Activated naive CD4-positive, alpha-beta T cell treated with anti-CD3 and anti-CD28 coated beads for 36 hours (primary cell): ENCODE measurements at regions of chr5 and their contacts with region 1.

Region 1: DNA sequence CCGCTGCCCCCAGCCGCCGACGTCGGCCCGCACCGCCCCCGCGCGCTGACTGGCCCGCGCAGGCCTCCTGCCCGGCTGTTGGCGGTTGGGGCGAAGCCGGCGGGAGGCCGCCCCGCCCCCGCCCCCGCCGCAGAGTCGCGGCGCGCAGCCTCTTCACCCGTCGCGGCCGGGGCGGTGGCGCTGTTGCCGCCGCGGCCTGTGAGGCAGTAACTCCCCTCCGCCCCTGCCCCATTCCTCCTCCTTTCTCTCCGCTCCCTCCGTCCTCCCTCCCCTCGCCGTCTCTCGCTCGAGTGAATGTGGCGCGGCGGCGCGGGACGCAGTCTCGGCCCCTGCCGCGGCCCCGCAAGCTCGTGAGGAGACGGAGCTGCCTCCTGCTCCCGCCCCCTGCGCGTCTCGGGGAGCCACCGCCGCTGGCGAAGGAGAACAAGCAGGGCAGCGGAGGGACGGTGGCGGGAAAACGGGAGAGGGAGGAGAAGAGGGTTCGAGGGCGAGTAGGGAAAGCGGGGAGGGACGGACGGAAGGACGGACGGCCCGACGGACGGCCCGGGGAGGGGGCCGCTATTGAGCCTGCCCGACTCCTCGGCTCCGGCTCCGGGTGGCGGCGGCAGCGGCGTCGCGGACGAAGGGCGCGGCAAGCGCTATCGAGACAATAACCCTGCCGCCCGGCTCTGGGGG is 637 bp upstream of the ERBIN start:
- DNase-seq: peak; percentile 77
- H3K4me3 Mint-ChIP-seq: peak overlapping the region; percentile 82
- H3K27ac Mint-ChIP-seq: peak overlapping the region; percentile 92
- H3K4me1 Mint-ChIP-seq: peaks cover 26% of the 10 kb centered on the region
- H3K27me3 Mint-ChIP-seq: no peaks in the 10 kb centered on the region

Region 2: GRCh38 chr5:64768358-64769312 is 1157.1 kb before region 1 on chr5 and contains the starts of genes CWC27 and SREK1IP1:
- CTCF ChIA-PET with region 1: no interaction called
- intact Hi-C with region 1: loop called (anchors 1 kb)
- DNase-seq: peak; percentile 90
- H3K4me3 Mint-ChIP-seq: peak within 1 kb of the TSS; percentile 99
- H3K27ac Mint-ChIP-seq: peak within 1 kb of the TSS; percentile 97
- H3K4me1 Mint-ChIP-seq: peaks cover 53% of the 10 kb centered on the region
- H3K27me3 Mint-ChIP-seq: no peaks in the 10 kb centered on the region
- total RNA-seq, gene CWC27: 35.8 to 39.8 TPM
- total RNA-seq, gene SREK1IP1: 16.7 to 17.6 TPM

Region 3: DNA sequence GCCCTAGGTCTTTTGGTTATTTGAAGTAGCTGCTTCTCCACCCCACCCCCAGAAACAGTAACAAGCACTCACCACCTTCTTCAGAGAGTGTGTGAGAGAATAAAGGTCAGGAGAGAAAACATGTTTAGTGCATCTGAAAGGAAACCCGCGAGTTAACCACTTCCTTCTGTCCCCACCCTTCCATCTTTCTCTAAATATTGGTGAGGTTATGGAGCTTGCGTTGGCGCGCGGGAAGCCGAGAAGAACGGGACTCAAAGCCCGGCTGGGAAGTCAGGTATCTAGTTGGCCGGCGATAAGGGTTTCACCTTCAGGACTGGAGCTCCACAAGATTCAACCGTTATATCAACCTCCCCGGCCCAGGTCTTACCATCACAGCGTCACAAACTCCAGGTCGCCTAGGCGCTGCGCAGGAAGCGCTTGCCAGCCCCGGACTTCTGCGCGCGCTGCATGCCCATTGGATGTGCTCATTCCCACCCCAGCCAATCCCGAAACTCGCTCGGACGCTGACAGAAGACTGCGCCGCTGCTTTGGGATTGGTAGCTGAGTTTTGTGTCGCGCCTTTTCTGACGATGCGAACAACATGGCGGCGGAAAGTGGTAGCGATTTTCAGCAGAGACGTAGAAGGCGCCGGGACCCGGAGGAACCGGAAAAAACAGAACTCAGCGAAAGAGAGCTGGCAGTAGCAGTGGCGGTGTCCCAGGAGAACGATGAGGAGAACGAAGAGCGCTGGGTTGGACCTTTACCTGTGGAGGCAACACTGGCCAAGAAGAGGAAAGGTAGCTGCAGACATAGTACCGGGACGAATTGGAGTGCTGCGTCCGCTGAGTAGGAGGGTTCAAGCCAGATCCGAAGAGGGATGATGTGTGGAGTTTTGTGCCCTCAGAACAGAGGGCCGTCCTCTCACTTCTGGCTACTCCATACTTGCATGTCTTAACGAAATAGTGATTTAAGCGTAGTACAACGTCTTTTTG is 362.7 kb before region 1 on chr5 and contains the starts of genes CENPK and PPWD1:
- CTCF ChIA-PET with region 1: no interaction called
- intact Hi-C with region 1: loop called (anchors 2 kb)
- DNase-seq: peak; percentile 98
- H3K4me3 Mint-ChIP-seq: peak within 1 kb of the TSS; percentile 98
- H3K27ac Mint-ChIP-seq: peak within 1 kb of the TSS; percentile 96
- H3K4me1 Mint-ChIP-seq: peaks cover 45% of the 10 kb centered on the region
- H3K27me3 Mint-ChIP-seq: no peaks in the 10 kb centered on the region
- total RNA-seq, gene CENPK: 80.9 to 83.1 TPM
- total RNA-seq, gene PPWD1: 33.6 to 33.9 TPM

Region 4: GRCh38 chr5:65721720-65722574 is 203.8 kb before region 1 on chr5 and contains the starts of genes NLN and SGTB:
- CTCF ChIA-PET with region 1: no interaction called
- intact Hi-C with region 1: loop called (anchors 1 kb)
- DNase-seq: peak; percentile 80
- H3K4me3 Mint-ChIP-seq: peak within 1 kb of the TSS; percentile 88
- H3K27ac Mint-ChIP-seq: peak within 1 kb of the TSS; percentile 94
- H3K4me1 Mint-ChIP-seq: peaks cover 13% of the 10 kb centered on the region
- H3K27me3 Mint-ChIP-seq: no peaks in the 10 kb centered on the region
- total RNA-seq, gene NLN: 32.4 to 35.5 TPM
- total RNA-seq, gene SGTB: 16.1 to 17.3 TPM

Region 5: GRCh38 chr5:65801352-65801783 is 124.4 kb before region 1 on chr5:
- CTCF ChIA-PET with region 1: no interaction called
- intact Hi-C with region 1: loop called (anchors 1 kb)
- DNase-seq: no peak
- H3K4me3 Mint-ChIP-seq: no peak overlapping the region
- H3K27ac Mint-ChIP-seq: no peak overlapping the region
- H3K4me1 Mint-ChIP-seq: peaks cover 33% of the 10 kb centered on the region
- H3K27me3 Mint-ChIP-seq: no peaks in the 10 kb centered on the region

Region 6: DNA sequence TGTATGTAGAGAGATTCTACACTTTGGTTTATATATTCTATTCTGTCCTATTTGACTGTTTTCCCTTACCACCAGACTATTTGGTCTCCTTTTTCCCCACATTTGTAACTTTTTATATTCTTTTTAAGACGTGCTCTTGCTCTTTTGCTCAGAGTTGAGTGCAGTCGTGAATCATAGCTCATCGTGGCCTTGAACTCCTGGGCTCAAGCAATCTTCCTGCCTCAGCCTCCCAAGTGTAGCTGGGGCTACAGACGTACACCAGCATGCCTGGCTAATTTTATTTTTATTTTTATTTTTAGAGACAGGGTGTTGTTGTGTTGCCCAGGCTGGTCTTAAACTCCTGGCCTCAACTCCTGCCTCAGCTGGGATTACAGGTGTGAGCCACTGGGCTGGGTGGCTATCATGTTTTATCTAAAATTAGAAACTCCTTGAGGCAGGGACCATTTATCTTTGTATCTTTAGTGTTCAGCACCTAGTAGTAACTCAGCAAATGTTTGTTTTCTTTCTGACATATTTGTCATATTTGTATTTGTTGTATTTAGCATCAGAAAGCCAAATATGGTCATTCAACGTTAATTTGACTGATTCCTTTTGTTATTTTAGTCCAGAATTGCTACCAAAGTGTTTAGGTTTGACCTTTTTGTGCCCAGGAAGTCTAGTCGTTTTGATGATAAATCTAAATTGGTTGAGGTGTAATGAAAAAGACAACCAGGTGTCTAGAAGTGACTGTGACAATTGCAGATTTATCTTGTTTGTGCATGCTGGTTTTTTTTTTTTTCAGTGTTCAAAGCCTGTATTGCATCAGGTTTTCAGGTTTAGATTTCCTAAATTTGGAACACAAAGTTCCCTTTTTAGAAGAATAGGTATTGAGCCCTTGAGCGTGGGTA is 45.0 kb after region 1 on chr5:
- CTCF ChIA-PET with region 1: interaction called, 3 read pairs
- intact Hi-C with region 1: loop called (anchors 2 kb)
- DNase-seq: no peak
- H3K4me3 Mint-ChIP-seq: peak overlapping the region; percentile 20
- H3K27ac Mint-ChIP-seq: peak overlapping the region; percentile 66
- H3K4me1 Mint-ChIP-seq: peaks cover 60% of the 10 kb centered on the region
- H3K27me3 Mint-ChIP-seq: no peaks in the 10 kb centered on the region

Region 7: GRCh38 chr5:66144074-66144833 is 218.5 kb after region 1 on chr5 and contains the start of gene SREK1:
- CTCF ChIA-PET with region 1: no interaction called
- intact Hi-C with region 1: loop called (anchors 1 kb)
- DNase-seq: peak; percentile 90
- H3K4me3 Mint-ChIP-seq: peak within 1 kb of the TSS; percentile 92
- H3K27ac Mint-ChIP-seq: peak within 1 kb of the TSS; percentile 98
- H3K4me1 Mint-ChIP-seq: peaks cover 53% of the 10 kb centered on the region
- H3K27me3 Mint-ChIP-seq: no peaks in the 10 kb centered on the region
- total RNA-seq, gene SREK1: 52.2 to 60.0 TPM

Region 8: DNA sequence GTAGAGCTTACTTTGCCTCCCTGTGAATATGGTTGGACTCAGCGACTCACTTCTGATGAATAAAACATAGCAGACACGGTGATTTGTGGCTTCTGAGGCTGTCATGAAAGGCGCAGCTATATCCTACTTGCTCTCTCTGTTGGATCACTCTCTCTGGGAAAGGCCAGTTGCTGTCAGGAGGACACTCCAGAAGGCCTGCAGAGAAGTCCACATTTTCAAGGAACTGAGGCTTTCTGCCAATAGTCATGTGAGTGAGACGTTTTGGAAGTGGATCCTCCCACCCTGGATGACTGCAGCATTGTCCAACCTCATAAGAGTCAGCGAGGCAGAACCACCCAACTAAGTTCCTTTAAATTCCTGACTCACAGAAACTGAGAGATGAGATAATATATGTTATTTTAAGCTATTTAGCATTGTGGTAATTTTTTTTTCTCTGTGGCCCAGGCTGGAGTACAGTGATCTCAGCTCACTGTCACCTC is 514.5 kb after region 1 on chr5:
- CTCF ChIA-PET with region 1: no interaction called
- intact Hi-C with region 1: no loop called
- DNase-seq: peak; percentile 36
- H3K4me3 Mint-ChIP-seq: no peak overlapping the region
- H3K27ac Mint-ChIP-seq: no peak overlapping the region
- H3K4me1 Mint-ChIP-seq: peaks cover 6% of the 10 kb centered on the region
- H3K27me3 Mint-ChIP-seq: no peaks in the 10 kb centered on the region